CD4-positive, alpha-beta T cell (primary cell): ENCODE measurements at regions of chr4 and their contacts with region 1.

Region 1: GRCh38 chr4:140153718-140154571 is at the start of gene MAML3:
- DNase-seq: peak; percentile 71 to 92 (median 81)
- ATAC-seq: peak; percentile 23
- H3K4me3 ChIP-seq: peak within 1 kb of the TSS; percentile 60
- H3K4me3 Mint-ChIP-seq: peak within 1 kb of the TSS; percentile 97
- H3K27ac ChIP-seq: peak within 1 kb of the TSS in 1 of 2 donors; percentile 89
- H3K27ac Mint-ChIP-seq: peak within 1 kb of the TSS; percentile 97
- H3K4me1 ChIP-seq: peaks cover 51% of the 10 kb centered on the region
- H3K4me1 Mint-ChIP-seq: peaks cover 45% of the 10 kb centered on the region
- H3K27me3 ChIP-seq: no peaks in the 10 kb centered on the region
- H3K27me3 Mint-ChIP-seq: no peaks in the 10 kb centered on the region
- CTCF ChIP-seq: no peak
- total RNA-seq, gene MAML3: 2.5 to 2.9 TPM

Region 2: GRCh38 chr4:139301113-139301820 is 852.7 kb before region 1 on chr4 and contains the start of gene NAA15:
- CTCF ChIA-PET with region 1: no interaction called
- POLR2A ChIA-PET with region 1: interaction called, 4 read pairs
- intact Hi-C with region 1: loop called in 1 of 2 experiments (anchors 5 kb)
- DNase-seq: peak; percentile 95 to 99 (median 96)
- ATAC-seq: peak; percentile 86
- H3K4me3 ChIP-seq: peak within 1 kb of the TSS; percentile 91
- H3K4me3 Mint-ChIP-seq: peak within 1 kb of the TSS; percentile 95
- H3K27ac ChIP-seq: peak within 1 kb of the TSS; percentile 97 to 98
- H3K27ac Mint-ChIP-seq: peak within 1 kb of the TSS; percentile 94
- H3K4me1 ChIP-seq: peaks cover 26% of the 10 kb centered on the region
- H3K4me1 Mint-ChIP-seq: peaks cover 67% of the 10 kb centered on the region
- H3K27me3 ChIP-seq: no peaks in the 10 kb centered on the region
- H3K27me3 Mint-ChIP-seq: no peaks in the 10 kb centered on the region
- CTCF ChIP-seq: no peak
- total RNA-seq, gene NAA15: 54.2 to 57.1 TPM

Region 3: GRCh38 chr4:140012688-140013486 is 141.1 kb before region 1 on chr4:
- CTCF ChIA-PET with region 1: interaction called, 4 read pairs
- POLR2A ChIA-PET with region 1: no interaction called
- intact Hi-C with region 1: loop called (anchors 2 to 5 kb)
- DNase-seq: peak; percentile 44 to 81 (median 55)
- ATAC-seq: peak; percentile 93
- H3K4me3 ChIP-seq: no peak overlapping the region
- H3K4me3 Mint-ChIP-seq: no peak overlapping the region
- H3K27ac ChIP-seq: no peak overlapping the region
- H3K27ac Mint-ChIP-seq: no peak overlapping the region
- H3K4me1 ChIP-seq: no peaks in the 10 kb centered on the region
- H3K4me1 Mint-ChIP-seq: no peaks in the 10 kb centered on the region
- H3K27me3 ChIP-seq: no peaks in the 10 kb centered on the region
- H3K27me3 Mint-ChIP-seq: peaks cover 7% of the 10 kb centered on the region
- CTCF ChIP-seq: peak; percentile 82

Region 4: GRCh38 chr4:140095694-140096482 is 58.1 kb before region 1 on chr4:
- CTCF ChIA-PET with region 1: no interaction called
- POLR2A ChIA-PET with region 1: interaction called, 19 read pairs
- intact Hi-C with region 1: loop called in 1 of 2 experiments (anchors 1 kb)
- DNase-seq: peak; percentile 16 to 92 (median 43)
- ATAC-seq: peak; percentile 72
- H3K4me3 ChIP-seq: peak overlapping the region; percentile 44
- H3K4me3 Mint-ChIP-seq: peak overlapping the region; percentile 77
- H3K27ac ChIP-seq: peak overlapping the region; percentile 69 to 77
- H3K27ac Mint-ChIP-seq: peak overlapping the region; percentile 96
- H3K4me1 ChIP-seq: peaks cover 46% of the 10 kb centered on the region
- H3K4me1 Mint-ChIP-seq: peaks cover 76% of the 10 kb centered on the region
- H3K27me3 ChIP-seq: no peaks in the 10 kb centered on the region
- H3K27me3 Mint-ChIP-seq: no peaks in the 10 kb centered on the region
- CTCF ChIP-seq: no peak

Region 5: DNA sequence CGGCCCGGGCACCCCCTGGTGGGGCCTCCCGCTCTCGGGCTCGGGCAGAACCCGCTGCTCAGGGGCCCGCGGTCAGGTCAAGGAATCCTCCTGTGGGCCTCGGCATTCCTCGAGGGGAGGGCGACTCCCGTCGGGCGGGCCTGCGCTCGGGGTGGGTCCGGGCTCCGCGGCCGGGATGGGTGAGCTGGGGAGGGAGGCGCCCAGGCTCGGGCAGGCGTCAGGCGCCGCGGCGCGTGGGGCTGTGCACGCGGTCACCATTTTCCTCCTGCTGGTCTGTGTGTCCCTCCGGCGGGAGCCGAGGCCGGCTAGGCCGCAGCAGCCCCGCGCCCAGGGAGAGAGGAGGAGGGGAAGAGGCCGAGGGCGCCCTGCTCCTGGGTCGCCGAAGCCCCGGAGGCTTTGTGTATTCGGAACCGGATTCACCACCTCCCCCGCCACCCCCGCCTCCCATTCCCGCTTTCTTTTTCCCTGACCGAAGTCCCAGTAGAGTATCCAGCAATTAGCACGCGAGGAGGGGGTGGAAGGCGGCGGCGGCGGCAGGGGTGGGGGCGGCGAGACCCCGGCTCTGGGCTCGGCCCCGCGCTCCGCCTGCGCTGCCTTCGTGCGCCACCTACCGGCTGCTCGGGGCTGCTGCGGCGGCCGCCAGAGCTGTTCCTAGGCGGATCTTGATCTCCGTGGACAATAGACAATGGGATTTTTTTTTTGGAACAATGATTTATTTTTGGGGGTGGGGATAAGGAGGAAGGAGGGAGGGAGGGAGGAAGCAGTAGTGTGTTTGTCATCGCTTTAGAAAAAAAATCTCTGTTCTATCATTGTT is 99.0 kb after region 1 on chr4:
- CTCF ChIA-PET with region 1: interaction called, 11 read pairs
- POLR2A ChIA-PET with region 1: interaction called, 9 read pairs
- intact Hi-C with region 1: loop called (anchors 1 to 2 kb)
- DNase-seq: peak; percentile 24 to 82 (median 56)
- ATAC-seq: peak; percentile 75
- H3K4me3 ChIP-seq: peak overlapping the region; percentile 59
- H3K4me3 Mint-ChIP-seq: peak overlapping the region; percentile 87
- H3K27ac ChIP-seq: no peak overlapping the region
- H3K27ac Mint-ChIP-seq: no peak overlapping the region
- H3K4me1 ChIP-seq: peaks cover 7% of the 10 kb centered on the region
- H3K4me1 Mint-ChIP-seq: peaks cover 16% of the 10 kb centered on the region
- H3K27me3 ChIP-seq: peaks cover 8 to 9% of the 10 kb centered on the region in 2 experiments
- H3K27me3 Mint-ChIP-seq: peaks cover 13% of the 10 kb centered on the region
- CTCF ChIP-seq: peak; percentile 94

Region 6: GRCh38 chr4:140523857-140524742 is 370.2 kb after region 1 on chr4 and contains the start of gene ELMOD2:
- CTCF ChIA-PET with region 1: no interaction called
- POLR2A ChIA-PET with region 1: interaction called, 7 read pairs
- intact Hi-C with region 1: loop called (anchors 5 to 10 kb)
- DNase-seq: peak; percentile 93 to 99 (median 96)
- ATAC-seq: peak; percentile 99
- H3K4me3 ChIP-seq: peak within 1 kb of the TSS; percentile 65
- H3K4me3 Mint-ChIP-seq: peak within 1 kb of the TSS; percentile 91
- H3K27ac ChIP-seq: peak within 1 kb of the TSS in 1 of 2 donors; percentile 58
- H3K27ac Mint-ChIP-seq: peak within 1 kb of the TSS; percentile 79
- H3K4me1 ChIP-seq: peaks cover 10% of the 10 kb centered on the region
- H3K4me1 Mint-ChIP-seq: peaks cover 26% of the 10 kb centered on the region
- H3K27me3 ChIP-seq: no peaks in the 10 kb centered on the region
- H3K27me3 Mint-ChIP-seq: no peaks in the 10 kb centered on the region
- CTCF ChIP-seq: peak; percentile 82
- total RNA-seq, gene ELMOD2: 12.3 to 14.9 TPM